ENCODE measurements at regions of chr7 and their contacts with region 1.

Region 1: DNA sequence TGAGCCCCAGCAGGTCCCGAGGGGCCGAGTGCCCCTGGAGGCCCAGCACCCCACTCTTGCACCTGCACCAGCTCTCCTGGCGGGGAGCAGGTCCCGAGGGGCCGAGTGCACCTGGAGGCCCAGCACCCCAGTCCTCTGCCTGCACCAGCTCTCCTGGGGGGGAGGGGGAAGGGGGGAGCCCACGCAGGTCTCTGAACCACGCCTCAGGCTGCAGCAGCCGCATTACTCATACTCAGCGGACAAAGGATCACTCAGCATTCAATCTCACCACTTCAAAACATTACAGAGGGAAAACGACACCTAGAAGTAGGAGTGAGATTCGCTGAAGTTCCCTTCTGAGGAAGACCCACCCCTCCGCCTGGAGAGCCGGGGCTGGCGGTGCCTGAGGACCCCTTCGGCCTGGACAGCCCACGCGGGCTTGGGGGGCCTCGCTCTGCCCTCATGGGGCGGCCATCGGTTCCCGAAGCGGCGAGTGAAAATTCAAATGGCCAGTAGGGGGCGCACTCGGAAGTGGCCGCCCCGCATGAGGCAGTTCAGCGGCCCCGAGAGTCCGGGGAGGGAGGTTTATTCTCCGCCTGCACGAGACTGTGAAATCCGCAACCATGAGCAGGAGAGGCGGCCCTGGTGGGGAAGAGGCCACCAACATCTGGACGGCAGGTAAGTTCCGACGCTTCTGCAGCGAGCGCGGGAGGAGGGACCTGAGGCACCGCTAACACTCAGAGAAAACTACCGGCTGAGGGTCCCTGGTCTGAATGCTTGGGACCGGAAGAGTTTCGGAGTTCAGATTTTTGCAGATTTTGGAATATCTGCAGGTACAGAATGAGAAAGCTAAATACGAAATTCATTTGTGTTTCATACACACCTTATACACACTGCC is 1.1 kb upstream of the GPER1 start:
- DNase-seq: no peak
- H3K4me3 ChIP-seq: peak overlapping the region; percentile 48
- H3K27me3 ChIP-seq: no peaks in the 10 kb centered on the region
- CTCF ChIP-seq: peak; percentile 89

Region 2: GRCh38 chr7:1103009-1103788 is 16.4 kb after region 1 on chr7:
- CTCF ChIA-PET with region 1: interaction called, 16 read pairs
- POLR2A ChIA-PET with region 1: no interaction called
- DNase-seq: no peak
- H3K4me3 ChIP-seq: no peak overlapping the region
- H3K27me3 ChIP-seq: no peaks in the 10 kb centered on the region
- CTCF ChIP-seq: no peak

Region 3: GRCh38 chr7:1175967-1176851 is 89.4 kb after region 1 on chr7:
- CTCF ChIA-PET with region 1: interaction called, 12 read pairs
- POLR2A ChIA-PET with region 1: no interaction called
- DNase-seq: no peak
- H3K4me3 ChIP-seq: peak overlapping the region; percentile 25
- H3K27me3 ChIP-seq: 0 out of 2 replicates have a peak, but pooled peaks cover 1% of the 10 kb centered on the region
- CTCF ChIP-seq: peak; percentile 95